ENCODE measurements at regions of chr3 and their contacts with region 1.

Region 1: GRCh38 chr3:4978204-4978965 is 852 bp upstream of the BHLHE40 start:
- DNase-seq: peak; percentile 89
- H3K4me3 Mint-ChIP-seq: peak overlapping the region; percentile 91
- H3K27ac Mint-ChIP-seq: peak overlapping the region; percentile 100
- H3K4me1 Mint-ChIP-seq: peaks cover 36% of the 10 kb centered on the region
- H3K27me3 Mint-ChIP-seq: no peaks in the 10 kb centered on the region

Region 2: DNA sequence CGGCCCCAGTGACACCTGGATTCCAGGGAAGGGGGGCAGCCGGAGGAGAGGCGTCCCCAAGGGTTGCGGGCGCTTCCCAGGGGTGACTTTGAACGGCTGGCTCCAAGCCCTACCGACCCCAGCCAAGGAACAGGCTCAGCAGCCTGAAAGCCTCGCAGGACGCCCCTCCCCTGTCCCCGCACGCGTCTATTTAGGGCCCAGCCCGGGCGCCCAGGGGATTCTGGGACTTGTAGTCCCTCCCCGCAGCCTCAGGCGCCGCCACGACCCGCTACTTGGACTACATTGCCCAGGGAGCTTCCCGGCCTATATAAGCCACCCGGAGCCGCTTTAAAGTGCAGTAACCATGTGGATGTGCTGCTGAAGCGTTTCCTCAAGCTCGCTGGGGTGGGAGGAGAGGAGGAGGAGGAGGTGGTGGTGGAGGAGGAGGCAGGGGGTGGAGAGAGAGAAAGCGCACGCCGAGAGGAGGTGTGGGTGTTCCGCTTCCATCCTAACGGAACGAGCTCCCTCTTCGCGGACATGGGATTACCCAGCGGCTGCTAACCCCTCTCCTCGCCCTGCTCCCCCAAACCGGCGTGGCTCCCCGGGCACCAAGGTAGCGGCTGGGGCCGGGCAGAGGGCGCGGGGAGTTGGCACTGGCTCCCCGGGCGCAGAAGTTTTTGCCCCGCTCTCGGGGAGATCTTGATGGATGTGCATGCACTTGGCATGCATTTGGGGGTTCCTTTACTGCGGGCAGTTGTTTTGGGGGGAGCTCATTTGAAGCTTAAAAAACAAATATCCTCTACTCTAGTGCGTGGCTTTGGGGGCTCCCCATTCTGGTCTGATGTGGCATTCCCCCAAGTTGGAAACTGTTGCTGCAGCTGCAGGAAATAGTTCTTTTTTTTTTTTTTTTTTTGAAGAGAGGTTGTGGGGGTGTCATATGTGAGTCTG is 485.1 kb before region 1 on chr3 and contains the start of gene ITPR1:
- intact Hi-C with region 1: loop called (anchors 1 kb)
- DNase-seq: peak; percentile 97
- H3K4me3 Mint-ChIP-seq: peak within 1 kb of the TSS; percentile 96
- H3K27ac Mint-ChIP-seq: peak within 1 kb of the TSS; percentile 83
- H3K4me1 Mint-ChIP-seq: peaks cover 59% of the 10 kb centered on the region
- H3K27me3 Mint-ChIP-seq: peaks cover 35% of the 10 kb centered on the region
- total RNA-seq, gene ITPR1: 108 and 113 TPM in 2 replicates

Region 3: GRCh38 chr3:4776980-4777581 is 201.3 kb before region 1 on chr3:
- intact Hi-C with region 1: loop called (anchors 1 kb)
- DNase-seq: peak; percentile 32
- H3K4me3 Mint-ChIP-seq: peak overlapping the region; percentile 73
- H3K27ac Mint-ChIP-seq: peak overlapping the region; percentile 98
- H3K4me1 Mint-ChIP-seq: peaks cover 82% of the 10 kb centered on the region
- H3K27me3 Mint-ChIP-seq: no peaks in the 10 kb centered on the region

Region 4: DNA sequence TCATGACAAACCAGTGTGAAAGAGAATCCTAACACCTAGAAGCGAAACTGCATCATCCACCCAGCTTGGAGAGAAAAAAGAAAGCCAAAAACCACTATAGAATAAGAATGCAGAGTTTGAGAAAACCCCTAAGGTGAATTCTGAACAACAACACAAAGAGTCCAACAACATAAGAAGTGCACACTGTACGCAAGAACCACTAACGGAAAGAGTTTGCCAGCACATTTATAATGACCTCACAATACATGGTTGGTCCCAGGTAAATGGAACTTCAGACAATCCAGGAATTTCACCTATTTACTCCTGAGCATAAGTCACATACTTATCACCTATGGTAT is 127.5 kb before region 1 on chr3:
- intact Hi-C with region 1: loop called (anchors 1 kb)
- DNase-seq: peak; percentile 56
- H3K4me3 Mint-ChIP-seq: peak overlapping the region; percentile 67
- H3K27ac Mint-ChIP-seq: peak overlapping the region; percentile 99
- H3K4me1 Mint-ChIP-seq: peaks cover 85% of the 10 kb centered on the region
- H3K27me3 Mint-ChIP-seq: no peaks in the 10 kb centered on the region

Region 5: GRCh38 chr3:5006755-5007202 is 28.4 kb after region 1 on chr3:
- intact Hi-C with region 1: loop called (anchors 1 kb)
- DNase-seq: peak; percentile 88
- H3K4me3 Mint-ChIP-seq: peak overlapping the region; percentile 71
- H3K27ac Mint-ChIP-seq: peak overlapping the region; percentile 89
- H3K4me1 Mint-ChIP-seq: peaks cover 72% of the 10 kb centered on the region
- H3K27me3 Mint-ChIP-seq: no peaks in the 10 kb centered on the region

Region 6: GRCh38 chr3:5187156-5187919 is 209.0 kb after region 1 on chr3 and contains the start of gene EDEM1:
- intact Hi-C with region 1: loop called (anchors 1 kb)
- DNase-seq: peak; percentile 96
- H3K4me3 Mint-ChIP-seq: peak within 1 kb of the TSS; percentile 93
- H3K27ac Mint-ChIP-seq: peak within 1 kb of the TSS; percentile 98
- H3K4me1 Mint-ChIP-seq: peaks cover 39% of the 10 kb centered on the region
- H3K27me3 Mint-ChIP-seq: no peaks in the 10 kb centered on the region
- total RNA-seq, gene EDEM1: 169 and 192 TPM in 2 replicates

Region 7: GRCh38 chr3:5463991-5464390 is 485.6 kb after region 1 on chr3:
- intact Hi-C with region 1: no loop called
- DNase-seq: no peak
- H3K4me3 Mint-ChIP-seq: no peak overlapping the region
- H3K27ac Mint-ChIP-seq: no peak overlapping the region
- H3K4me1 Mint-ChIP-seq: no peaks in the 10 kb centered on the region
- H3K27me3 Mint-ChIP-seq: peaks cover 6% of the 10 kb centered on the region